ENCODE measurements at regions of chr7 and their contacts with region 1.

Region 1: DNA sequence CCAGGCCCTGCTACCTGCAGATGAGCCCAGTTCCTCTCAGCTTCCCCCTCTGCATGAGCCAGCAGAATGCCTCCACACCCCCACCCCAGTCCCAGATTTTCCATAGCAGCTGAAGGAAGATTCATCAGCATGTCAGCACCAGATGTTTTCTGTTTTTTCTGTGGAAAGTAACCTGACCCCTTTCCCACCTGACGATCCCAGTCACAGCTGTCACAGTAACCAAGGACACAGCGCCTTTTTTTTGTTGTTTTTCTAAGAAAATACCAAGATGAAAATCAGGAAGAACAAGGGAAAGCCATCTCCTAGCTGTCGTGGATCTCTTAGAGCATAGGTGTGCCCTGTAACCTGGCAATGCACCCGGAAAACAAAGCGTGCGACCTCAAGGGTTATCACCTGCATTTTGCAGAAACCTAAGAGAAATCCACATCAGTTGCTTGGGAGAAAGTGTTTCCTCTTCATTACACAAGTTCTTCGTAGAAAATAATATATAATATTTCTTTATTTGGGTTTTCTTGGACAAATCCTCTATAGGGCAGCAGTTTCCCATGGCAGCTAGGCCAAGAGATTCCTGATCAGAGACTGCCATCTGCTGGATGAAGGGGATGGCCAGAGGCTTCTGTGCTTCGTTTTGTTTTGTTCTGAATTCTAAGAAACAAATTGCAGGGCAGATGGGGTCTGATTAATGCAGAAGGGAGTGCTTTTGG is 401.9 kb downstream of the TNS3 start:
- DNase-seq: peak; percentile 85
- H3K4me3 ChIP-seq: peak overlapping the region; percentile 23
- H3K27ac ChIP-seq: peak overlapping the region; percentile 8
- H3K4me1 ChIP-seq: peaks cover 55% of the 10 kb centered on the region
- CTCF ChIP-seq: peak; percentile 98

Region 2: DNA sequence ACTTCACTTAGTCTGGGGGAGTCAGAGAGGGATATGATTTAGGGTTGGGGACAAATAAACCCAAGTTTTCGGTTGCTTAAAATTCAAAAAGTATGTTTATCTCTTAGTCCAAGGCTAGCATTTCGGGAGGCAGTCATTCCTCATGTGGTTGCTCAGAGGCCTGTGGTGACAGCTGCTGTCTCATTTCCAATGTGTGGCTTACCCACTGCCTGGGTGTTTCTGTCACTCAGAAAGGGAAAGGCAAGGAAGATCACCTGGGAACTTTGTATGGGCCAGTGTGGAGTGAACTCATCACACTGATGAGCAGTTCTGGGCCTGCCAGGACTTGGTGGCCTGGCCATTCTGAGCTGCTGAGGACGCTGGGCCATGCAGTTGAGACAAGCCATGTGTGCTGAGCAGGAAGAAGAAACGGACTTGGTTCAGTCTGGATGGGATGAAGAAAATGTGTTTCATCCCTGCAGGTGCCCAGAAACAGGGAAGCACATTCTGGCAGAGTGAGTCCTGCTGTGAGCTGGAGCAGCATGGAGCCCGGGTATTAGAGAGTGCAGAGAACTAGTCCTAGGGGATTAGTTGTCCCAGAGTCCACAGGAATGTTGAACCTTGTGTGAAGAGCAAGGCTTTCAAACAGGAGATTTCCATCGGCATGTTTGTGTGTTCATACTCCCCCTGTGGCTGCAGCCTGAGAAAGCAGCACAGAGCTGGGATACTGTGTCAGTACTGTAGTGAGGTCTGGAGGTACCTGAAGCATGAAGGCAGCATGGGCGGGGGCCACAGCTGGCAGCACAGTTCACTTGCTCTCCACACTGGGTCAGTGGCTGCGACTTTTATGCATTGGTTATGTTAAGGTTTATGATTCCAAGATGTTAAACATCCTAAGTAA is 1047.8 kb before region 1 on chr7:
- CTCF ChIA-PET with region 1: no interaction called
- POLR2A ChIA-PET with region 1: no interaction called
- intact Hi-C with region 1: loop called (anchors 5 kb)
- DNase-seq: no peak
- H3K4me3 ChIP-seq: no peak overlapping the region
- H3K27ac ChIP-seq: no peak overlapping the region
- H3K4me1 ChIP-seq: no peaks in the 10 kb centered on the region
- CTCF ChIP-seq: no peak

Region 3: DNA sequence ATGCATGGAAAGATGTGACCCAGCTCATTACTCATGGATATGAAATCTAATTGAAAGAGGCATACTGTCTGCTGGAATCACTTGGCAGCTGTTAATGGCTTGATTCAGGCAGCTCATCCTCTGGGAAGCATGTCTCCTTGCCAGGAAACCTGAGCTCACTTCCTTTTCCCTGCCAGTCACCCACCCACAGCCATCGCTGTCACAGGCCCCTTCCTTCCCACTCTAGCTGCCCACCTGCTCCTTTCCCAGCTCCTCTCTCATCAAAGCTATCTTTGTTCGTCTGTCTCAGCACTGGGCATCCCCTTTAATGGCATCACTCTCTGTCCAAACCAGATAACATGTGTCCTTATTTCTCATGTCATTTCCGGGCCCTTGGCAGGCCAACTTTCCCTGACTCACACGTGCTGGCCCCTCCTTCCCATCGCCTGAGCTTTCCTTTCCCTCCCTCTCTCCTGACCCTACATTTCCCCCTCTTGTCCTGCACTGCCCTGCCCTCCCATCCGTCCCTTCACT is 319.9 kb before region 1 on chr7:
- CTCF ChIA-PET with region 1: no interaction called
- POLR2A ChIA-PET with region 1: no interaction called
- intact Hi-C with region 1: no loop called
- DNase-seq: no peak
- H3K4me3 ChIP-seq: no peak overlapping the region
- H3K27ac ChIP-seq: no peak overlapping the region
- H3K4me1 ChIP-seq: no peaks in the 10 kb centered on the region
- CTCF ChIP-seq: no peak

Region 4: DNA sequence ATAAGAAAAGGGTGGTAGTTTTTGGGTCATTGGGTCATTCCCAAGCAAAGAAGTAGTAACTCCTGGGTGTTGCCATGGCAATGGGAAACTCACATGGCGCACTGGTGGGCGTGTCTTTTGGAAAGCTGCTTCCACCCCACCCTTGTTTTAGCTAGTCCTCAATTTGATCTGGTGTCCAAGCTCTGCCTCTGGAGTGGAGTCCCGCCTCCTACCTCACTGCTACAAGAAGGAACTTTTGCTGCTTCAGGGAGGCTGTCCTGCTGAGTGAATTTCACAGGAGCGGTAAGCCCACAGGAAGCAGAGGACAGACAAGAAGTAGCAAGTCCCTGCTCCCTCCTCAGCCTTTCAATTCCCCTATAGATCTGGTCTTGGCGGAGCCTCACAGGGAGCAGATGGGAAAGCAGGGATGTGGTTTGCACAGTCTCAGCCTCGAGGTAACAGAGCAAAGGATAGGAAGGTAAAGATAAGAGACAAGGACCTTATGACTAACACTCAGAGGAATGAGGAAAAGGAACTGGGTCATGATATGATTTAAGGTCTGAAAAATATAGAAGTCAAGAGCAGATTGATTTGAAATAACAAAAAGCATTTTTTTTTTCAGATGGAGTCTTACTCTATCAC is 298.3 kb before region 1 on chr7:
- CTCF ChIA-PET with region 1: no interaction called
- POLR2A ChIA-PET with region 1: interaction called, 3 read pairs
- intact Hi-C with region 1: loop called (anchors 10 kb)
- DNase-seq: no peak
- H3K4me3 ChIP-seq: no peak overlapping the region
- H3K27ac ChIP-seq: no peak overlapping the region
- H3K4me1 ChIP-seq: peaks cover 9% of the 10 kb centered on the region
- CTCF ChIP-seq: no peak

Region 5: GRCh38 chr7:47088329-47089067 is 91.5 kb before region 1 on chr7:
- CTCF ChIA-PET with region 1: no interaction called
- POLR2A ChIA-PET with region 1: no interaction called
- intact Hi-C with region 1: loop called (anchors 5 kb)
- DNase-seq: peak; percentile 45
- H3K4me3 ChIP-seq: no peak overlapping the region
- H3K27ac ChIP-seq: no peak overlapping the region
- H3K4me1 ChIP-seq: no peaks in the 10 kb centered on the region
- CTCF ChIP-seq: peak; percentile 95

Region 6: DNA sequence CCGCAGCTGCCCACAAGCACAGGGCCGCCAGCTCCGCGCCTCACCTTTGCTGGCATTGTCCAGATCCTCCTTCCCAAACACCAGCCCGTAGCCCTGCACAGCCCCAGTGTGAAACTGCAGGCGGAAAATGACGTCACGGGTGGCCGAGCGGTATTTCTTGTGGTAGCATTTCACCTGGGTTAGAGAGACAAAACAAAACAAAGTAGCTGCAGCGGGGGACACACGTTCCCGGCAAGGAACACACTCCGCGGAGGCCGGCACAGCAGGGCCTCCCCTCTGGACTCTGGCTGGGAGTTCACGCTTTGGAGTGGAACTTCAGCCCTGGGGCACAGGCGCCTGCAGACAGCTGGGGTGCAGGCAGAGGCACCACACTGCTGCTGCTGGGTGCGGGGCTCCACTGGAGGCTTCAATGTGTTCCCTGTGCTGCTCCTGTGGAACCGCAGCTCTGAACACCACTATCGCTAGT is 220.8 kb after region 1 on chr7:
- CTCF ChIA-PET with region 1: no interaction called
- POLR2A ChIA-PET with region 1: no interaction called
- intact Hi-C with region 1: no loop called
- DNase-seq: no peak
- H3K4me3 ChIP-seq: no peak overlapping the region
- H3K27ac ChIP-seq: no peak overlapping the region
- H3K4me1 ChIP-seq: no peaks in the 10 kb centered on the region
- CTCF ChIP-seq: no peak

Measured in OCI-LY7 (cell line).